Heart right ventricle (tissue), 16 donors: ENCODE measurements at regions of chr17 and their contacts with region 1.

Region 1: GRCh38 chr17:48024937-48025906 is 12.4 kb downstream of the COPZ2 start:
- DNase-seq: peak; percentile 96 to 98
- ATAC-seq: peak; percentile 87 to 95 (median 92)
- H3K4me3 ChIP-seq: peak overlapping the region; percentile 27 to 60 (median 54)
- H3K27ac ChIP-seq: peak overlapping the region; percentile 32 to 89 (median 82)
- H3K4me1 ChIP-seq: peaks cover 18 to 51% (median 41%) of the 10 kb centered on the region in 9 donors
- H3K27me3 ChIP-seq: peaks cover 0 to 28% (median 16%) of the 10 kb centered on the region in 7 donors
- CTCF ChIP-seq: peak; percentile 53 to 88 (median 80)

Region 2: GRCh38 chr17:48081858-48082257 is 56.6 kb after region 1 on chr17:
- intact Hi-C with region 1: no loop called
- DNase-seq: no peak
- ATAC-seq: no peak
- H3K4me3 ChIP-seq: no peak overlapping the region
- H3K27ac ChIP-seq: no peak overlapping the region
- H3K4me1 ChIP-seq: peaks cover 0 to 23% (median 13%) of the 10 kb centered on the region in 9 donors
- H3K27me3 ChIP-seq: no peaks in the 10 kb centered on the region
- CTCF ChIP-seq: no peak

Region 3: GRCh38 chr17:48093341-48094045 is 68.3 kb after region 1 on chr17:
- intact Hi-C with region 1: no loop called
- DNase-seq: no peak
- ATAC-seq: no peak
- H3K4me3 ChIP-seq: no peak overlapping the region
- H3K27ac ChIP-seq: no peak overlapping the region
- H3K4me1 ChIP-seq: peaks cover 0 to 8% (median 0%) of the 10 kb centered on the region in 9 donors
- H3K27me3 ChIP-seq: no peaks in the 10 kb centered on the region
- CTCF ChIP-seq: no peak

Region 4: GRCh38 chr17:48335858-48336500 is 310.8 kb after region 1 on chr17:
- intact Hi-C with region 1: loop called in 1 of 10 experiments (anchors 10 kb)
- DNase-seq: no peak
- ATAC-seq: no peak
- H3K4me3 ChIP-seq: no peak overlapping the region
- H3K27ac ChIP-seq: no peak overlapping the region
- H3K4me1 ChIP-seq: no peaks in the 10 kb centered on the region
- H3K27me3 ChIP-seq: peaks cover 0 to 100% (median 84%) of the 10 kb centered on the region in 7 donors
- CTCF ChIP-seq: peak; percentile 46 to 83 (median 75)